PC-9 (cell line): ENCODE measurements at regions of chr7 and their contacts with region 1.

Region 1: DNA sequence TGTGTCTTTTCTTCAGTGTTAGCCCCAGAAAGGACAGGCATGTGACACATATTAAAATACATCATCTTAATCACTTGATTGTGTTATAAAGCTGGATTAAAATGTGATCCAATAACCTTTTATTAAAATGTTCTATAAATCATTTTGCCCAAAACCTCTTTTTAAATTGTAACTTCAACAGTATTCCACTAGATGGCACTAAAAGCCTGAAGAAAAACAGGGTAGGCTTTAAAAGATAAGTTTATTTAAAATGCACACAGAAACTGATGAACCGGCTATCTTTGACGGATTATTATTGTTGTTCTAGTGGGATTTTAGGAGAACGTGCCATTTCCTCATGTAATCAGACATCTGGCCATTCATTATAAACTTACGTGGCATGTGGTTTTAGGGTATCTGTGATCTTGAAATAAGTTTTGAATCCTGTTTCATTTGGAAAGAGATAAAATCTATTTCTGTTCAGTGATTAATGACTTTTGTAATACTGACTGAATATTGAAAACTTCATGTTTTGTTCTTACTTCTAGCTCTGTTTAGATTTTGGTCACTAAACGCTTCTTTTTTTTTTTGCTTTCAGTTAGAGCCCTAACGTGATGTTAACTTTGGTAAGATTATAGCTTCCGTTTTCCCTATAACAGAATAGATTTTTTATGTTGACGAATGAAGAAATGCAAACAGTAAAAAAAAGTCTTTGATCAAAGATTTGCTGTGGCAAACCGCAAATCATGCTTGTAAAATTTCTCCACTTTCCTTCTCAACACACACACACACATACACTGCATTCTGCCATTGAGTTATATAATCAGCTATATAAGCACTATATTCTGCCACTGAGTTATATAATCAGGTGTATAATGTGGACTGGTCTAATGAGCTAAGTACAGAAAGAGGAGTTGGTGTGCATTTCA is 13.6 kb downstream of the VPS50 start:
- DNase-seq: no peak
- H3K4me3 ChIP-seq: no peak overlapping the region
- H3K27ac ChIP-seq: no peak overlapping the region
- H3K4me1 ChIP-seq: no peaks in the 10 kb centered on the region
- H3K27me3 ChIP-seq: no peaks in the 10 kb centered on the region
- CTCF ChIP-seq: peak; percentile 79

Region 2: DNA sequence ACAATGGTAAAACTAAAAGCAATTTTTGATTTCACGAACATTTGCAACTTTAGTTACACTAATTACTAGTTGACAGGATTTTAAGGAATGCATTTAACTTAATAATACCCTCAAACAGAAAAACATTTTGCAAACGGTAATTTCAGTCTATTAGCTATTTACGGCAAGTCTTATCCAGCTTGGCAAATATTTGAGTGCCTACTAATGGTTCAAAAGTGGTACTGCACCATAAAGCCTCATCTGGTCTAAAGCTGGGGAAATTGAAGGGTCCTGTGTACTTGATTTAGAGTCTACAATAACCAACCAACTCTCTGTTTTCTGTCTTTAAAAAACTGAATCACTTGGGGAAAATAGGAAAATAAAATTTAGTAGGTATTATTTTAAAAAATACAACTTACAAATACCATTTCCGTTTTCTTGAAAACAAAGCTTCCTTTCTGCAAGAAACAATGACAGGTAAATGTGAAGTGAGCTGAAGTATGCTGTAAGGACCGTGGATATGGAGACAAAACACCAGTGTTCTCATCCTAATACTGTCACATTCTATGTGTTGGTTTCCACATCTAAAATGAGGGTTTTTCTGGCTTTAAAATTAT is 128.7 kb after region 1 on chr7:
- CTCF ChIA-PET with region 1: no interaction called
- POLR2A ChIA-PET with region 1: no interaction called
- intact Hi-C with region 1: loop called (anchors 2 kb)
- DNase-seq: no peak
- H3K4me3 ChIP-seq: no peak overlapping the region
- H3K27ac ChIP-seq: no peak overlapping the region
- H3K4me1 ChIP-seq: no peaks in the 10 kb centered on the region
- H3K27me3 ChIP-seq: no peaks in the 10 kb centered on the region
- CTCF ChIP-seq: peak; percentile 78

Region 3: GRCh38 chr7:93551063-93551904 is 305.5 kb after region 1 on chr7:
- CTCF ChIA-PET with region 1: interaction called, 15 read pairs
- POLR2A ChIA-PET with region 1: no interaction called
- intact Hi-C with region 1: loop called (anchors 1 kb)
- DNase-seq: peak in 1 of 2 experiments; percentile 6
- H3K4me3 ChIP-seq: no peak overlapping the region
- H3K27ac ChIP-seq: no peak overlapping the region
- H3K4me1 ChIP-seq: no peaks in the 10 kb centered on the region
- H3K27me3 ChIP-seq: no peaks in the 10 kb centered on the region
- CTCF ChIP-seq: peak; percentile 68

Region 4: DNA sequence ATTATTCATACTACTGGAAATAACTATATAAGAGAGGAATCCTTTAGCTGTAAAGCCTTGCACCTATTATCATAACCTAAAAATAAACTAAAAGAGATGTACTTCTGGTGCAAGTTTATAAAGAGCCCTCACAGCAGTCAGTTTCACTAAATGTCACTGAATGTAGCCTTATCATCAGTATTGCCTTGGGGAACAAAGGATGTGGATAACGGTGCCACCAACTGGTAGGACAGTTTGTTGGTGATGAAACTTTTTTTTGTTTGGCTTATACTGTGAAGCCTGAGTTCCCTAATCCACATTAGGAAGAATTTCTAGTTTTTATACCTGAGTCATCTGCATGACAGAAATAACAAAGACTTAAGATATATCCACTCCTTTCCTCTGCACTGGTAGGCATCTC is 1031.0 kb after region 1 on chr7:
- CTCF ChIA-PET with region 1: no interaction called
- POLR2A ChIA-PET with region 1: no interaction called
- intact Hi-C with region 1: loop called (anchors 10 kb)
- DNase-seq: peak in 1 of 2 experiments; percentile 12
- H3K4me3 ChIP-seq: no peak overlapping the region
- H3K27ac ChIP-seq: no peak overlapping the region
- H3K4me1 ChIP-seq: no peaks in the 10 kb centered on the region
- H3K27me3 ChIP-seq: no peaks in the 10 kb centered on the region
- CTCF ChIP-seq: peak; percentile 49

Region 5: GRCh38 chr7:94436018-94436604 is 1190.3 kb after region 1 on chr7:
- CTCF ChIA-PET with region 1: no interaction called
- POLR2A ChIA-PET with region 1: no interaction called
- intact Hi-C with region 1: loop called (anchors 5 kb)
- DNase-seq: peak; percentile 37 to 48
- H3K4me3 ChIP-seq: no peak overlapping the region
- H3K27ac ChIP-seq: no peak overlapping the region
- H3K4me1 ChIP-seq: no peaks in the 10 kb centered on the region
- H3K27me3 ChIP-seq: no peaks in the 10 kb centered on the region
- CTCF ChIP-seq: peak; percentile 88